Motor neuron (in vitro differentiated cells): ENCODE measurements at regions of chr15 and their contacts with region 1.

Region 1: GRCh38 chr15:58864602-58865424 is 68.7 kb downstream of the SLTM start:
- ATAC-seq: peak; percentile 12 to 71 (median 35)
- H3K4me3 ChIP-seq: no peak overlapping the region
- H3K27ac ChIP-seq: no peak overlapping the region
- H3K4me1 ChIP-seq: no peaks in the 10 kb centered on the region

Region 2: DNA sequence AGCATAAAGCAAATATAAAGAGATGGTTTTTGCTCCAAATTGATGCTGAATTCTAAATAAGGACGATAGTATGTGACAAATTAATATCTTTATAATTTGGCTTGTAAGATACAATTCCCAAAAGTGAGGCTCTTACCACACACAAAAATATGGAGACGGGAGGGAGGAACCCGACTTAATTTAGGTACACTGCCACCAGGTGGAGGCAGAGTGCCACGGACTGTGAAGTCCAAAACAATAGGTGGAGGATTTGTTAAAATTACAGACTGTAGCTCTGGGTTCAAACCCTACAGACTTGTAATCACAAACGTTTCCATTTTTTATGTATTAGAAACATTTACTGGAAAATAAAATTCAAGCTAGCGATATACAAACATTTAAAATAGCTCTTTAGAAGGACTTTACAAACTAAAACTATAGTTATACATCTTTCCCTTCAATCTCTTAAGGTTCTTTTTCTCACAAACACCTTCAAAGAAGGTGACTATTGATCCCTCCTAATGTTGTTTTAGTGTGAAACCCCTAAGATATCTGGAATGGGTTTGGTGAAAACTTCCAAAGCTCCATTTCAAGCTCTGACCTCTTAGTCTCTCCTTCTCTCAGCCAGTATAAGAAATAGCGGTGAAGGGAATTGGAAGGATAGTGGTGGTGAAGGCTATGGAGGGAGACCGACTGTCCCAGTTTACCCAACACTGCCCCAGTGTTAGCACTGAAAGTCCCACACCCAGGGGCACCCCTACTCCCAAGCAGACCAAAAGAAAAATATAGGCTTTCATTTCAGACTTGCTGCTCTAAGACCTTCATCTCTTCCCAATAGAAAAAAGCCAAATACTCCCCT is 636.9 kb before region 1 on chr15:
- in situ Hi-C with region 1: loop called in 1 of 9 experiments (anchors 25 kb)
- ATAC-seq: peak in 3 of 8 experiments; percentile 63 to 73 (median 72)
- H3K4me3 ChIP-seq: no peak overlapping the region
- H3K27ac ChIP-seq: no peak overlapping the region
- H3K4me1 ChIP-seq: peaks cover 15 to 21% of the 10 kb centered on the region in 2 donors

Region 3: GRCh38 chr15:58977887-58978286 is 113.1 kb after region 1 on chr15:
- in situ Hi-C with region 1: no loop called
- ATAC-seq: no peak
- H3K4me3 ChIP-seq: no peak overlapping the region
- H3K27ac ChIP-seq: no peak overlapping the region
- H3K4me1 ChIP-seq: no peaks in the 10 kb centered on the region